ENCODE measurements at regions of chr5 and their contacts with region 1.

Region 1: GRCh38 chr5:80407735-80408482 is at the start of gene ZFYVE16:
- DNase-seq: peak; percentile 94
- H3K4me3 Mint-ChIP-seq: peak within 1 kb of the TSS; percentile 95
- H3K27ac Mint-ChIP-seq: peak within 1 kb of the TSS; percentile 99
- H3K4me1 Mint-ChIP-seq: peaks cover 20% of the 10 kb centered on the region
- H3K27me3 Mint-ChIP-seq: no peaks in the 10 kb centered on the region
- total RNA-seq, gene ZFYVE16: 9.0 and 11.4 TPM in 2 replicates

Region 2: GRCh38 chr5:79514391-79515105 is 893.4 kb before region 1 on chr5:
- intact Hi-C with region 1: loop called (anchors 5 kb)
- DNase-seq: peak; percentile 87
- H3K4me3 Mint-ChIP-seq: peak overlapping the region; percentile 93
- H3K27ac Mint-ChIP-seq: peak overlapping the region; percentile 96
- H3K4me1 Mint-ChIP-seq: peaks cover 35% of the 10 kb centered on the region
- H3K27me3 Mint-ChIP-seq: peaks cover 3% of the 10 kb centered on the region

Region 3: GRCh38 chr5:80255732-80256479 is 152.0 kb before region 1 on chr5 and contains the start of gene SERINC5:
- intact Hi-C with region 1: loop called (anchors 5 kb)
- DNase-seq: peak; percentile 83
- H3K4me3 Mint-ChIP-seq: peak within 1 kb of the TSS; percentile 95
- H3K27ac Mint-ChIP-seq: peak within 1 kb of the TSS; percentile 99
- H3K4me1 Mint-ChIP-seq: peaks cover 42% of the 10 kb centered on the region
- H3K27me3 Mint-ChIP-seq: no peaks in the 10 kb centered on the region
- total RNA-seq, gene SERINC5: 18.9 and 19.0 TPM in 2 replicates

Region 4: DNA sequence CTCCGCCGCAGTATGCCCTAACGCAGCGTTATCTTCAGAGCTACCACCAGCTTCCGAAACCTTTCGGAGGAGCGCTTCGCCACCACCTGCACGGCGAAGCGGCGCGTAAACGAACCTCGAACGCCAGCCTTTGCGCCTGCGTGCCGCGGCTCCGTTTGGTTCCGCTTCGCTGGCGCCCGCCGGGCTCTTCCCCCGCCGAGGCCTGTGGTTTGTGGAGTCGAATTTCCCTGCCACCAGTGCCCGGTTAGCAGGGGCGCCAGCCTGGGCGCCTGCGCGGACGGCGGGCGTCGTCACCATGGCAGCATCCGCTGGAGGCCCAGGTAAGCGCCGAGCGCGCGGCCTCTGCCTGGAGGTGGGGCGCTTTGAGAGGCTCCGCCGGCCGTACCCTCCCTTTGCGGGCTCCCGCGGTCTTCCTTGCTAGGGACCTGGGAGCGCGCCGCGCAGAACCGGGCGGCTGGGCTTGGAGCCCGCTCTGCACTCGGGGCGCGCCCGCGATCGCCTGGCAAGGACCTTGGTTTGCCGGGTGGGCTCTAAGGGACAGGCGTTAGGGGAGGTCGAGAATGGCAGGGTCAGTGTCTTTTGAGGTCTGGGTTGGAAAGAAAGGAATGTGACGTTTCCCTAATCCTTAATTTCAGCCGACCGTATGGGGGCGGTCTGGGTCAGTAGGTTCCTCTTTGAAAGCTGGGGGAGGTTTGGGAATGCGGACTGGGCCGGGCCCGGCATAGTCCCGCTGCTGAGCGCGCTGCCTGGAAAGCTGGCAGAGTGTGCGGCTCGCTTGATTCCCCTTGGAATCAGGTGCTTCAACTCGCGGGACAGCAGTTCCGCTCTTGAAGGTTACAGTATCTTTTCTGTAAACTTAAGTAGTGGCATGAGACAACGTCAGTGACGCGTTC is 80.2 kb after region 1 on chr5 and contains the start of gene FAM151B:
- intact Hi-C with region 1: loop called (anchors 5 kb)
- DNase-seq: peak; percentile 71
- H3K4me3 Mint-ChIP-seq: peak within 1 kb of the TSS; percentile 83
- H3K27ac Mint-ChIP-seq: no peak within 1 kb of the TSS
- H3K4me1 Mint-ChIP-seq: peaks cover 19% of the 10 kb centered on the region
- H3K27me3 Mint-ChIP-seq: peaks cover 24% of the 10 kb centered on the region
- total RNA-seq, gene FAM151B: 0.43 and 0.76 TPM in 2 replicates

Region 5: DNA sequence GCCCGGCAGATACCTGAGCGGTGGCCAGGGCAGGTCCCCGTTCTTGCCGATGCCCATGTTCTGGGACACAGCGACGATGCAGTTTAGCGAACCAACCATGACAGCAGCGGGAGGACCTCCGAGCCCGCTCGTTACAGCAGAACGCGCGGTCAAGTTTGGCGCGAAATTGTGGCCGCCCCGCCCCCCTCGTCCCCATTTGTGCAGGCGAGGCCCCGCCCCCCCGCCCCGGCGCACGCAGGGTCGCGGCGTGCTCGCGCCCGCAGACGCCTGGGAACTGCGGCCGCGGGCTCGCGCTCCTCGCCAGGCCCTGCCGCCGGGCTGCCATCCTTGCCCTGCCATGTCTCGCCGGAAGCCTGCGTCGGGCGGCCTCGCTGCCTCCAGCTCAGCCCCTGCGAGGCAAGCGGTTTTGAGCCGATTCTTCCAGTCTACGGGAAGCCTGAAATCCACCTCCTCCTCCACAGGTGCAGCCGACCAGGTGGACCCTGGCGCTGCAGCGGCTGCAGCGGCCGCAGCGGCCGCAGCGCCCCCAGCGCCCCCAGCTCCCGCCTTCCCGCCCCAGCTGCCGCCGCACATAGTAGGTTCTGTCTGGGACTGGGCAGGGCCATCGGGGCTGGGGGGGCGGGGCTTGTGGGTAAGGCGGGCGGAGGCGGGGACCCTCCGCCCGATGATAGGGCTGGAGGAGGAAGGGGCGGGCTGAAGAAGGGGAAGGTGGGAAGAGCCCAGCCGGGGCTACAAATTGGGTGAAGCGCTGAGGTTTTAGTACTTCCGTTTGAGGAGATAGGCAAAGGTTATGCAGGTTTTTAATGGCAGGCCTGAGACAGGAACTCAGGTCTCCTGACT is 246.7 kb after region 1 on chr5 and contains the starts of genes DHFR and MSH3:
- intact Hi-C with region 1: loop called (anchors 1 kb)
- DNase-seq: peak; percentile 85
- H3K4me3 Mint-ChIP-seq: peak within 1 kb of the TSS; percentile 88
- H3K27ac Mint-ChIP-seq: peak within 1 kb of the TSS; percentile 96
- H3K4me1 Mint-ChIP-seq: peaks cover 20% of the 10 kb centered on the region
- H3K27me3 Mint-ChIP-seq: no peaks in the 10 kb centered on the region
- total RNA-seq, gene DHFR: 55.7 and 56.9 TPM in 2 replicates
- total RNA-seq, gene MSH3: 20.6 and 21.2 TPM in 2 replicates

Region 6: GRCh38 chr5:80864706-80865435 is 457.0 kb after region 1 on chr5:
- intact Hi-C with region 1: loop called (anchors 10 kb)
- DNase-seq: no peak
- H3K4me3 Mint-ChIP-seq: peak overlapping the region; percentile 27
- H3K27ac Mint-ChIP-seq: peak overlapping the region; percentile 34
- H3K4me1 Mint-ChIP-seq: peaks cover 60% of the 10 kb centered on the region
- H3K27me3 Mint-ChIP-seq: no peaks in the 10 kb centered on the region

Measured in activated T-helper 2 cell treated with anti-CD3 and anti-CD28 coated beads, Interferon-gamma antibody, Interleukin-2, Interleukin-4, amounts not matched to agents 10 μg/mL and 5 μg/mL and 100 μg/mL, durations not matched to agents 14 hours and 24 hours and 36 hours (primary cell).